ENCODE measurements at regions of chr1 and their contacts with region 1.

Region 1: GRCh38 chr1:179809506-179810366 is 66.6 kb downstream of the FAM163A start:
- DNase-seq: peak; percentile 77
- H3K4me3 Mint-ChIP-seq: no peak overlapping the region
- H3K27ac Mint-ChIP-seq: no peak overlapping the region
- H3K4me1 Mint-ChIP-seq: peaks cover 18% of the 10 kb centered on the region
- H3K27me3 Mint-ChIP-seq: peaks cover 76% of the 10 kb centered on the region
- CTCF ChIP-seq: peak; percentile 92

Region 2: DNA sequence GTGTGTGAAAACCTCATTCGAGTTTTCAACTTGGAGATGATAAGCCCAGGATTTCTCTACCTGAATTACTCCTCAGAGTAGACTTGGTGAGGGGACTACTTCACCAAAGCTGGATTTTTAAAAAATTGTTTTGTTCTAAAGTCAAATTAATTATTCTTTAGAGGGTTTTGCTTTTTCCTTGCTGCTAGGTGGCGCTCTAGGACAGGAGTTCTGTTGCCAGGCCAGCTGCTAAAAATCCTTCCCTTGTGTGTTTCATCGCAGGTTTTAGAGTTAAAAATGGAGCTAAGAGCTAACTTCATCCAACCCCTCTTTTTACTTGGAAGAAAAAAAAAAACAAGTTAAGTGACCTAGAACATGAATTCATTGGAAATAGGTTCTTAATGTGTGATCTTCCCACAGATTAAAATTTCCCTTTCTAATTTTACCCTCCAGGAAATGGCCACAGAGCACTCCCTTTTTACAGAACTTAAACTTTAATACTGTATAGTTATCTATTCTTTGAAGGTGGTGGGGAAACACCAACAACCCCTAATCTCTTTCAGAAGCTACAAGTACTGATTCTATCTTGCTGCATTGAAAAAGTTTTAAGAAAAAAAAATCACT is 103.3 kb before region 1 on chr1:
- CTCF ChIA-PET with region 1: interaction called, 180 read pairs
- intact Hi-C with region 1: loop called (anchors 1 kb)
- DNase-seq: peak; percentile 77
- H3K4me3 Mint-ChIP-seq: no peak overlapping the region
- H3K27ac Mint-ChIP-seq: no peak overlapping the region
- H3K4me1 Mint-ChIP-seq: peaks cover 9% of the 10 kb centered on the region
- H3K27me3 Mint-ChIP-seq: peaks cover 57% of the 10 kb centered on the region
- CTCF ChIP-seq: peak; percentile 82

Region 3: GRCh38 chr1:179798864-179799516 is 10.7 kb before region 1 on chr1:
- CTCF ChIA-PET with region 1: interaction called, 13 read pairs
- intact Hi-C with region 1: no loop called
- DNase-seq: no peak
- H3K4me3 Mint-ChIP-seq: no peak overlapping the region
- H3K27ac Mint-ChIP-seq: no peak overlapping the region
- H3K4me1 Mint-ChIP-seq: no peaks in the 10 kb centered on the region
- H3K27me3 Mint-ChIP-seq: peaks cover 96% of the 10 kb centered on the region
- CTCF ChIP-seq: no peak